H1 (cell line): ENCODE measurements at regions of chr1 and their contacts with region 1.

Region 1: GRCh38 chr1:211705467-211706091 is 30.2 kb upstream of the NEK2 start:
- DNase-seq: no peak
- H3K4me3 ChIP-seq: no peak overlapping the region
- H3K27ac ChIP-seq: no peak overlapping the region
- H3K4me1 ChIP-seq: no peaks in the 10 kb centered on the region
- H3K27me3 ChIP-seq: peaks cover 0 to 5% (median under 1%) of the 10 kb centered on the region in 4 experiments; a peak in 2 of 7 replicates
- CTCF ChIP-seq: no peak
- EP300 ChIP-seq: no peak
- POLR2A ChIP-seq: no peak
- RAD21 ChIP-seq: no peak

Region 2: DNA sequence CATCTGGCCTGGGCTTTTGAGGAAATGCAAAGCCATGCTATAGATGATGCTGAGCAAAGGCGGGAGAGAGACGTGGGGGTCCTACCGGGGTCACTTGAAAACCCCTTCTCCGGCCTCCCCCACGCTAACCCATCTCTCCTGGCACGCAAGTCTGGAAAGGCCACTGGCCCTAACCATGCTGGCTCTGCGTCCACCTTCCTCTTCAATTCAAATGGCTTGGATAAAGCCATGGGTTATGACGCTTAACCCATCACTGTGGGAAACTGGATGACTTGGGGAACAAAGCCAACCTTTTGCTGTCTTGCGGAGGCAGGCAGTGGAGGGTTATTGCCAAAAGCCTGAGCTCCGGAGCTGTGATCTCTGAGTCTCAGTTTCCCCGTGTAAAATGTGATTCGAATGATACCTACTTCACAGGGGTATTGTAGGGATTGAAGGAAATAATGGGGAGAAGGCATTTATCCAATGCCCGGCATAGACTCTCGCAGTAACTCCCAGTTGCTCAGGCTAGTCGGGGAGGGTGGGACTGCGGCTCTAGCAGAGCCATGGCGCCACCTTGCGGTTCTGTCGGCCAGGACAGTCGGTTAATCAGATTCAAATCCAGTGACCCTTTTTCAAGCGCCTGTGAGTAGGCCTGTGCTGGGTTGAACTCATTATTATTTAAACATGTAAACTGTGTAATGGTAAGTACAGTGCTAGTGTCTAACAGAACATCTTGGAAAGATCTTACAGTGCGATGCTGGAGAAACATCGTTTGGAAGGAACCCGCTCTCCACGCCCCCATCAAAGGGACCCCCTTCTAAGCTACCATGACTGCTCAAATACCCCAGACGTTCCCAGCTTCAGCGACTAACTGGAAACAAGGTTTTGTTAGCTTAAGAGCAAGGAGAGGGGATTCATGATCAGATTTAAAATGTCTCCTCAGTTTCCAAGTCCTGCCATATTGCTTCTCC is 50.5 kb before region 1 on chr1:
- CTCF ChIA-PET with region 1: no interaction called
- POLR2A ChIA-PET with region 1: no interaction called
- DNase-seq: peak; percentile 67 to 96
- H3K4me3 ChIP-seq: no peak overlapping the region
- H3K27ac ChIP-seq: no peak overlapping the region
- H3K4me1 ChIP-seq: peaks cover 0 to 4% (median 0%) of the 10 kb centered on the region in 4 experiments; a peak in 3 of 7 replicates
- H3K27me3 ChIP-seq: no peaks in the 10 kb centered on the region
- CTCF ChIP-seq: peak; percentile 88 to 95 (median 90)
- EP300 ChIP-seq: no peak
- POLR2A ChIP-seq: no peak
- RAD21 ChIP-seq: peak; percentile 97 to 99

Region 3: DNA sequence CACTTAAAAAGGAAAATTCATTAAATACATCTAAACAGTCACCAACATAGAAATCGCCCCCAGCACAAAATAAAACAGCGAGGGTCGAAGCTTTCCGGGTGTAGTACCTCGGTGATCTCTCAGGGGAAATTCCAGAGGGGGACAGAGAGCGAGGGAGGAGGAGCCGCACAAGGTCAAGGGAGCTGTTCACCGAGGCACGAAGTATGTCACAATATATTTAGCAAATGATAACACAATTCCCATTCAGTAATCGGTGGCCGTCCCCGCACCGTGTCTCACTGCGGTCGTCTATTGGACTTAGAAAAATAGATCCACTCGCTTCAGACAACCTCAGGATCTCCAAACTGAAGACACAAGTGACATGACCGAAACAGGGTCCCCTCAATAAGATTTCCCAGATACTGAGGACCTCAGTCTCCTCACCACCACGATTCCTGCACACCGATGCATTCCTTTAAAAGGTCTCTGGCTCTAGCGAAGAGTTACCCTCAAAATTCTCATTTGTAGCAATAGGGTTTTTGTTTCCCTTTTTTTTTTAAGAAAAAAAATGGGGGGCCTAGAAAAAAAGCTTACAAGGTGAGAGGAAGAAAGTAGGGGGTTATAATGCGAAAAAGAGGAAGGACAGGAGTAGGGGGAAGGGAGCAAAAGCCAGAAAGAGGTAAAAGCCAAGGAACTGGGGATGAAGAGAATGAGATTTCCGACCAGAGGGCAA is 123.9 kb after region 1 on chr1:
- CTCF ChIA-PET with region 1: interaction called, 15 read pairs
- POLR2A ChIA-PET with region 1: interaction called, 3 read pairs
- DNase-seq: peak in 1 of 2 experiments; percentile 58
- H3K4me3 ChIP-seq: peak overlapping the region; percentile 47 to 74 (median 57)
- H3K27ac ChIP-seq: no peak overlapping the region
- H3K4me1 ChIP-seq: peaks cover 0 to 7% (median 3%) of the 10 kb centered on the region in 4 experiments; a peak in 5 of 7 replicates
- H3K27me3 ChIP-seq: peaks cover 0 to 12% (median 6%) of the 10 kb centered on the region in 4 experiments; a peak in 5 of 7 replicates
- CTCF ChIP-seq: peak; percentile 18 to 38 (median 26); a peak in 3 of 4 replicates
- EP300 ChIP-seq: no peak
- POLR2A ChIP-seq: no peak
- RAD21 ChIP-seq: no peak; a peak in 1 of 4 replicates